Transverse colon (tissue), 4 donors: ENCODE measurements at regions of chr1 and their contacts with region 1.

Region 1: GRCh38 chr1:218304281-218305039 is 19.4 kb downstream of the RRP15 start:
- DNase-seq: no peak
- H3K4me3 ChIP-seq: no peak overlapping the region
- H3K27ac ChIP-seq: no peak overlapping the region
- H3K4me1 ChIP-seq: no peaks in the 10 kb centered on the region
- H3K27me3 ChIP-seq: no peaks in the 10 kb centered on the region
- CTCF ChIP-seq: no peak
- EP300 ChIP-seq: no peak
- POLR2A ChIP-seq: no peak

Region 2: DNA sequence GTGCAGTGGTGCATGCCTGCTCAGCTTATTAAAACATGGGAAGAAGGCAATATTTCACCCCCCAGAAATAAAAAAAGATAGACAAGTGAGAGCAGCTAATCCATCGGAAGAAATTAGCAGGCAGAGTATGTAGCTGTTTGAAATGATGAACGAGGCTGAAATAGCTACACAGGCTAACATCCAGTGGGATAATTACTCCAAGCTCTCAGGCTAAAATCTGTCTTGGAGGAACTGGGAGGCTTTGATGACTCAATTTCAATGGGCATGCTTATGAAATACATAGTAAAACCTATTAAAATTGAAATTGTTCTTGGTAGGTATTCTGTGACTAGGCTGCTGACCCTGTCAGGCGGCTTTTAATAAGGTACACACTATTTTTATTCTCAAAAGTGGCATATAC is 103.5 kb before region 1 on chr1:
- in situ Hi-C with region 1: no loop called
- intact Hi-C with region 1: no loop called
- DNase-seq: no peak
- H3K4me3 ChIP-seq: no peak overlapping the region
- H3K27ac ChIP-seq: no peak overlapping the region
- H3K4me1 ChIP-seq: no peaks in the 10 kb centered on the region
- H3K27me3 ChIP-seq: no peaks in the 10 kb centered on the region
- CTCF ChIP-seq: no peak
- EP300 ChIP-seq: no peak
- POLR2A ChIP-seq: no peak

Region 3: GRCh38 chr1:218242169-218242568 is 62.3 kb before region 1 on chr1:
- in situ Hi-C with region 1: no loop called
- intact Hi-C with region 1: no loop called
- DNase-seq: no peak
- H3K4me3 ChIP-seq: no peak overlapping the region
- H3K27ac ChIP-seq: no peak overlapping the region
- H3K4me1 ChIP-seq: no peaks in the 10 kb centered on the region
- H3K27me3 ChIP-seq: no peaks in the 10 kb centered on the region
- CTCF ChIP-seq: no peak
- EP300 ChIP-seq: no peak
- POLR2A ChIP-seq: no peak

Region 4: DNA sequence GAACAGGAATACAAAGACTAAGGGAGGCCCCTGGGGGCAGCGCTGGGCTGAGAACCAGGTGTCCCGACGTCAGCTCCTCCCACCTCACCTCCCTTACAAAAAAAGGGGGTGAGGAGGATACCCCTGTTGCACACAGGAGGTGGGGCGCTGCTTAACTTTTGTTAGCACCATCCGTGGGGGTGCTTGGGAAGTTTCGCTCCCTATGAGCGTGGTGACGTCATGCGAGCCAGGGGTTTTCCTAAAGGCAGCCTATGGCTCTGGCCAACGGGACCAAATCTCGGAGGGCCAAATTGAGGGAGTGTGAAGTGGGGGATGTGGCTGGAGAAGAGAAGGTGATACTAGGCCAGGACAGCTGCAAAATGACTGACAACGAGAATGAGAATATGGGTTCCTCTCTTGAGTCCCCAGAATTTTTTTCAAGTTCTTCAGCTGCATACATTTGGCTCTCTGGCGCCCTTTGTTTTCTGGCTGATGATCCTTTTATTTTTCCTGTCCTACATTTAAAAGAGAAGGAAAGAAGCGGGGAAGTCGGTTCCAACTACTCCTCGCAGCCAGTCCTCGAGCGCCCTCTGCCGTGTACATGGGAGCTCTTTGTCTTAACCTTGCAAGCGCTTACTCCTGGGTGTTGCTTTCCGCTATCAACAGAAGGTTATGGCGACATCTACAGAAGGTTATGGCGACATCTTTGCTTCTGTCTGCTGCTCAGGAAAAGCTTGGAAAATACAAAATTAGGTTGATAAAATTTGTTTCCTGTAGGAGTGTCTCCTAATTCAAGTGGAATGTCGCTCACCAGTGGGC is 1356.4 kb after region 1 on chr1:
- in situ Hi-C with region 1: loop called in 1 of 4 experiments (anchors 25 kb)
- intact Hi-C with region 1: no loop called
- DNase-seq: peak; percentile 75
- H3K4me3 ChIP-seq: peak overlapping the region in 1 of 4 donors; percentile 26
- H3K27ac ChIP-seq: no peak overlapping the region
- H3K4me1 ChIP-seq: peaks cover 0 to 3% (median 0%) of the 10 kb centered on the region in 4 donors
- H3K27me3 ChIP-seq: no peaks in the 10 kb centered on the region
- CTCF ChIP-seq: peak; percentile 31 to 59 (median 53)
- EP300 ChIP-seq: no peak
- POLR2A ChIP-seq: no peak